ENCODE measurements at regions of chr11 and their contacts with region 1.

Region 1: GRCh38 chr11:117083011-117083935 is 15.0 kb downstream of the SIK3 start:
- DNase-seq: no peak
- H3K4me3 ChIP-seq: peak overlapping the region in 2 of 4 donors; percentile 7 to 8
- H3K27ac ChIP-seq: peak overlapping the region in 3 of 4 donors; percentile 15 to 28 (median 17)
- H3K4me1 ChIP-seq: peaks cover 22 to 81% (median 74%) of the 10 kb centered on the region in 4 donors
- H3K27me3 ChIP-seq: no peaks in the 10 kb centered on the region
- CTCF ChIP-seq: no peak
- EP300 ChIP-seq: no peak
- POLR2A ChIP-seq: no peak

Region 2: GRCh38 chr11:117010808-117011540 is 72.3 kb before region 1 on chr11:
- intact Hi-C with region 1: loop called (anchors 10 kb)
- DNase-seq: no peak
- H3K4me3 ChIP-seq: no peak overlapping the region
- H3K27ac ChIP-seq: no peak overlapping the region
- H3K4me1 ChIP-seq: peaks cover 0 to 35% (median 23%) of the 10 kb centered on the region in 4 donors
- H3K27me3 ChIP-seq: no peaks in the 10 kb centered on the region
- CTCF ChIP-seq: no peak
- EP300 ChIP-seq: no peak
- POLR2A ChIP-seq: no peak